CD4-positive, alpha-beta T cell (primary cell): ENCODE measurements at regions of chr1 and their contacts with region 1.

Region 1: DNA sequence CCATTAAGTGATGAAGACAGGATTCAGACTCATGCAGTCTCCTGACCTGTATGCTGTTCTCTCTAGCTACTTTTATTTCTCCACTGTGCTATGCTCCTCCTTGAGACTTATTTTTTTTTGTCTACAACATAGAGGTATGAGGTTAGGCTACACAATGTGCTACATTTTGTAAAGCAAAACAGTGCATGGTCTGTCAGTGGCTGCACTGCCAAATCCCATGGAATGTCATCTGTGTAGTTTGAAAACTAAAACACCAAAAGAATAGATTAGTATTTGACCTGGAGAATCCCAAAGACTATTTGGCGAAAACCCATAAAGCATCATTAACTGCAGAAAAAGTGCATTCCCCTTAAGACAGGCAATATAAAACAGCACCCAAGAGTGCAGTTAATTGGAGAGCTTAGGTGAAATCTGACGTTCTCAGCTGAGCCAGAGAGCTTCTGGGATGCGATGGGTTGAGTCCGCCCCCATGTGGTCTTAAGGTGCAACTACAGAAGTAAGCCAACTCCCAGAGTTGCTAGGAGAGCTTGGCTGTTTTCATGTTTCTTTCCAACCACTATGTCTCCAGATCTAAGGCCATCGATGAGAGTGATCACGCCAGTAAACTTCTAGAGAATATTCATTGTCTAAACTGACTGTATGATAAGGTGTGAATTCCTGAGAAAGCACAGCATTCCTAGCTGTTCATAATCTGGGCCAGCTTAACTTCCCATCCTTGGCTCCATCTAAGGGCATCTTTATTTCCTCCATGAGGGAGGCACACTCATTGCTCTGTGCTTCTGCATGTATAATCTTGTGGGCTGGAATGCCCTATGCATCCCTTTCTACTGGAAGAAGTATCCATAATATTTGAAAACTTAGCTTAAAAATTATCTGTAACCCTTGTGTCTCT is 20.7 kb upstream of the CYP2J2 start:
- DNase-seq: peak; percentile 13 to 76 (median 35)
- ATAC-seq: peak; percentile 91
- H3K4me3 ChIP-seq: no peak overlapping the region
- H3K4me3 Mint-ChIP-seq: no peak overlapping the region
- H3K27ac ChIP-seq: no peak overlapping the region
- H3K27ac Mint-ChIP-seq: no peak overlapping the region
- H3K4me1 ChIP-seq: no peaks in the 10 kb centered on the region
- H3K4me1 Mint-ChIP-seq: no peaks in the 10 kb centered on the region
- H3K27me3 ChIP-seq: no peaks in the 10 kb centered on the region
- H3K27me3 Mint-ChIP-seq: no peaks in the 10 kb centered on the region
- CTCF ChIP-seq: peak; percentile 90

Region 2: DNA sequence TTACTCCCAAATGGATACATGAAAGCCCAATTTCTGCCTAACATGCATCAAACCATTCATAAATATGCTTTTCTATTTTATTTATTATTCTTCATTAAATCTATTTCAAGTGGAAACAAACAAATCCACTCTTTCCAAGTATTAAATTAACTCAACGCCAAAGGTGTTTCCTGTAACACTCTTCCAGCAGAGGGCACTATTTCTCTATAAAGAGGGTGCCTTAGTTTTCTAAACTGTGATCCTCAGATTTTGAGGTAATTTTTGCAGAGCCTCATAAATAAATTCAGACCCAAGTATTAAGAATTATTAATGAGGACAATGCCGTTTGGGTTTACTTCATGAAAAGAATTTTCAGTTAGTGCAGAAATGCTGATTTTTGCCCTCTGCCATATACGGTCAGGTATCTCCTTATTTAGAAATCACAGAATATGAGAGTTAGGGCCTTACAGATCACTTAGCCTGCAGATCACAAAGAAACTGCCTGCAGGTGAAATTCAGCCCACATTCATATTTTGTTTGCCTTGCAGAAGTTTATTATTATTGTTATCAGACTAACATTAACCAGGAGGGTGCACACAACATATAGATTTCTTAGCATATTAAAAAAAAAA is 1207.3 kb before region 1 on chr1:
- CTCF ChIA-PET with region 1: no interaction called
- POLR2A ChIA-PET with region 1: no interaction called
- intact Hi-C with region 1: loop called (anchors 5 kb)
- DNase-seq: peak in 4 of 14 experiments; percentile 42 to 78 (median 75)
- ATAC-seq: no peak
- H3K4me3 ChIP-seq: no peak overlapping the region
- H3K4me3 Mint-ChIP-seq: no peak overlapping the region
- H3K27ac ChIP-seq: no peak overlapping the region
- H3K27ac Mint-ChIP-seq: no peak overlapping the region
- H3K4me1 ChIP-seq: no peaks in the 10 kb centered on the region
- H3K4me1 Mint-ChIP-seq: no peaks in the 10 kb centered on the region
- H3K27me3 ChIP-seq: no peaks in the 10 kb centered on the region
- H3K27me3 Mint-ChIP-seq: no peaks in the 10 kb centered on the region
- CTCF ChIP-seq: peak; percentile 94

Region 3: GRCh38 chr1:59879574-59879973 is 67.7 kb before region 1 on chr1:
- CTCF ChIA-PET with region 1: interaction called, 10 read pairs
- POLR2A ChIA-PET with region 1: interaction called, 4 read pairs
- intact Hi-C with region 1: loop called in 1 of 2 experiments (anchors 1 kb)
- DNase-seq: peak; percentile 10 to 71 (median 34)
- ATAC-seq: no peak
- H3K4me3 ChIP-seq: no peak overlapping the region
- H3K4me3 Mint-ChIP-seq: no peak overlapping the region
- H3K27ac ChIP-seq: no peak overlapping the region
- H3K27ac Mint-ChIP-seq: no peak overlapping the region
- H3K4me1 ChIP-seq: no peaks in the 10 kb centered on the region
- H3K4me1 Mint-ChIP-seq: no peaks in the 10 kb centered on the region
- H3K27me3 ChIP-seq: no peaks in the 10 kb centered on the region
- H3K27me3 Mint-ChIP-seq: no peaks in the 10 kb centered on the region
- CTCF ChIP-seq: peak; percentile 59

Region 4: GRCh38 chr1:59903141-59903754 is 44.0 kb before region 1 on chr1:
- CTCF ChIA-PET with region 1: no interaction called
- POLR2A ChIA-PET with region 1: no interaction called
- intact Hi-C with region 1: loop called in 1 of 2 experiments (anchors 5 kb)
- DNase-seq: peak in 5 of 14 experiments; percentile 2 to 32 (median 8)
- ATAC-seq: no peak
- H3K4me3 ChIP-seq: no peak overlapping the region
- H3K4me3 Mint-ChIP-seq: no peak overlapping the region
- H3K27ac ChIP-seq: no peak overlapping the region
- H3K27ac Mint-ChIP-seq: no peak overlapping the region
- H3K4me1 ChIP-seq: no peaks in the 10 kb centered on the region
- H3K4me1 Mint-ChIP-seq: no peaks in the 10 kb centered on the region
- H3K27me3 ChIP-seq: no peaks in the 10 kb centered on the region
- H3K27me3 Mint-ChIP-seq: no peaks in the 10 kb centered on the region
- CTCF ChIP-seq: peak; percentile 32